ENCODE measurements at regions of chr1 and their contacts with region 1.

Region 1: GRCh38 chr1:32072622-32073298 is at the start of gene TMEM39B:
- DNase-seq: peak; percentile 97
- ATAC-seq: peak; percentile 83
- H3K4me3 Mint-ChIP-seq: peak within 1 kb of the TSS; percentile 90
- H3K27ac Mint-ChIP-seq: peak within 1 kb of the TSS; percentile 98
- H3K4me1 Mint-ChIP-seq: peaks cover 37% of the 10 kb centered on the region
- H3K27me3 Mint-ChIP-seq: no peaks in the 10 kb centered on the region
- total RNA-seq, gene TMEM39B: 25.2 to 29.8 TPM

Region 2: GRCh38 chr1:31296486-31297276 is 776.1 kb before region 1 on chr1 and contains the starts of genes SNRNP40 and ZCCHC17:
- CTCF ChIA-PET with region 1: no interaction called
- POLR2A ChIA-PET with region 1: no interaction called
- intact Hi-C with region 1: loop called in 1 of 2 experiments (anchors 2 kb)
- DNase-seq: peak; percentile 94
- ATAC-seq: peak; percentile 98
- H3K4me3 Mint-ChIP-seq: no peak within 1 kb of the TSS
- H3K27ac Mint-ChIP-seq: no peak within 1 kb of the TSS
- H3K4me1 Mint-ChIP-seq: peaks cover 34% of the 10 kb centered on the region
- H3K27me3 Mint-ChIP-seq: no peaks in the 10 kb centered on the region
- total RNA-seq, gene SNRNP40: 101 to 111 TPM
- total RNA-seq, gene ZCCHC17: 23.9 to 28.8 TPM

Region 3: GRCh38 chr1:31815752-31816500 is 256.8 kb before region 1 on chr1 and contains the start of gene SPOCD1:
- CTCF ChIA-PET with region 1: interaction called, 3 read pairs
- POLR2A ChIA-PET with region 1: no interaction called
- intact Hi-C with region 1: loop called in 1 of 2 experiments (anchors 5 kb)
- DNase-seq: peak; percentile 94
- ATAC-seq: peak; percentile 93
- H3K4me3 Mint-ChIP-seq: no peak within 1 kb of the TSS
- H3K27ac Mint-ChIP-seq: peak within 1 kb of the TSS; percentile 17
- H3K4me1 Mint-ChIP-seq: peaks cover 9% of the 10 kb centered on the region
- H3K27me3 Mint-ChIP-seq: no peaks in the 10 kb centered on the region
- total RNA-seq, gene SPOCD1: 0.79 to 0.91 TPM

Region 4: GRCh38 chr1:32142446-32143301 is 69.9 kb after region 1 on chr1:
- CTCF ChIA-PET with region 1: no interaction called
- POLR2A ChIA-PET with region 1: no interaction called
- intact Hi-C with region 1: loop called in 1 of 2 experiments (anchors 1 kb)
- DNase-seq: no peak
- ATAC-seq: no peak
- H3K4me3 Mint-ChIP-seq: no peak overlapping the region
- H3K27ac Mint-ChIP-seq: no peak overlapping the region
- H3K4me1 Mint-ChIP-seq: peaks cover 65% of the 10 kb centered on the region
- H3K27me3 Mint-ChIP-seq: no peaks in the 10 kb centered on the region

Region 5: DNA sequence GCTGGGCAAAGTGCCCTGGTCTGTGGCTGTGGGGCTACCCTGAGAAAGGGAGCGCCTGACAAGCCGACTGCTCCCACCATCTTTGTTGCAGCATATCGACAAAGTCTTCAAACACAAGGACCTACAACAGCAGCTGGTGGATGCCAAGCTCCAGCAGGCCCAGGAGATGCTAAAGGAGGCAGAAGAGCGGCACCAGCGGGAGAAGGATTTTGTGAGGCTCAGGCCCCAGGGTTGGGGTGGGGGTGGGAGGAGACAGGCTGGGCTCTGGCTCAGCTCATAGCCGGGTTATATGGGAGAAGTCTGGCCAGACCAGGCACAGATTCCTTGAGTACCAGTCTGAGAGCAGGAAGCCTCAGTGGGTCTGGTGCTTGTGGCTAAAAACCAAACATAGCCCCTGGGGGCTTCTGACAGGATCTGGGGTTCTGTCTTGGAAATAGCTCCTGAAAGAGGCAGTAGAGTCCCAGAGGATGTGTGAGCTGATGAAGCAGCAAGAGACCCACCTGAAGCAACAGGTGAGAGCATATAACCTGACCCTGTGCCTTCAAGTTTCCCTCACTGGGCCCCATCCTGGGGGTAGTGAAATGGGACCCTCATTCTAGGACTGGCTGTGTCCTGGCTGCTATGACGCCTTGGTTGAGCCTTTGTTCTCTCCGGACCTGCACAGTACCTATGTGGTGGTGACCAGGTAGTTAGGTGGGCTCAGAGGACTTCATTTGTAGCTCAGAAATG is 119.6 kb after region 1 on chr1:
- CTCF ChIA-PET with region 1: no interaction called
- POLR2A ChIA-PET with region 1: no interaction called
- intact Hi-C with region 1: no loop called
- DNase-seq: no peak
- ATAC-seq: no peak
- H3K4me3 Mint-ChIP-seq: no peak overlapping the region
- H3K27ac Mint-ChIP-seq: no peak overlapping the region
- H3K4me1 Mint-ChIP-seq: peaks cover 46% of the 10 kb centered on the region
- H3K27me3 Mint-ChIP-seq: no peaks in the 10 kb centered on the region

Region 6: GRCh38 chr1:32291708-32292492 is 219.1 kb after region 1 on chr1 and contains the start of gene HDAC1:
- CTCF ChIA-PET with region 1: no interaction called
- POLR2A ChIA-PET with region 1: no interaction called
- intact Hi-C with region 1: loop called in 1 of 2 experiments (anchors 1 kb)
- DNase-seq: peak; percentile 99
- ATAC-seq: peak; percentile 98
- H3K4me3 Mint-ChIP-seq: peak within 1 kb of the TSS; percentile 100
- H3K27ac Mint-ChIP-seq: peak within 1 kb of the TSS; percentile 99
- H3K4me1 Mint-ChIP-seq: peaks cover 43% of the 10 kb centered on the region
- H3K27me3 Mint-ChIP-seq: no peaks in the 10 kb centered on the region
- total RNA-seq, gene HDAC1: 132 to 146 TPM

Region 7: GRCh38 chr1:32650752-32651460 is 578.1 kb after region 1 on chr1 and contains the start of gene RBBP4:
- CTCF ChIA-PET with region 1: no interaction called
- POLR2A ChIA-PET with region 1: interaction called, 3 read pairs
- intact Hi-C with region 1: loop called in 1 of 2 experiments (anchors 1 kb)
- DNase-seq: peak; percentile 99
- ATAC-seq: peak; percentile 89
- H3K4me3 Mint-ChIP-seq: peak within 1 kb of the TSS; percentile 90
- H3K27ac Mint-ChIP-seq: peak within 1 kb of the TSS; percentile 99
- H3K4me1 Mint-ChIP-seq: peaks cover 48% of the 10 kb centered on the region
- H3K27me3 Mint-ChIP-seq: no peaks in the 10 kb centered on the region
- total RNA-seq, gene RBBP4: 323 to 331 TPM

Measured in activated CD4-positive, alpha-beta T cell treated with anti-CD3 and anti-CD28 coated beads for 36 hours (primary cell).